MCF 10A (cell line): ENCODE measurements at regions of chr20 and their contacts with region 1.

Region 1: DNA sequence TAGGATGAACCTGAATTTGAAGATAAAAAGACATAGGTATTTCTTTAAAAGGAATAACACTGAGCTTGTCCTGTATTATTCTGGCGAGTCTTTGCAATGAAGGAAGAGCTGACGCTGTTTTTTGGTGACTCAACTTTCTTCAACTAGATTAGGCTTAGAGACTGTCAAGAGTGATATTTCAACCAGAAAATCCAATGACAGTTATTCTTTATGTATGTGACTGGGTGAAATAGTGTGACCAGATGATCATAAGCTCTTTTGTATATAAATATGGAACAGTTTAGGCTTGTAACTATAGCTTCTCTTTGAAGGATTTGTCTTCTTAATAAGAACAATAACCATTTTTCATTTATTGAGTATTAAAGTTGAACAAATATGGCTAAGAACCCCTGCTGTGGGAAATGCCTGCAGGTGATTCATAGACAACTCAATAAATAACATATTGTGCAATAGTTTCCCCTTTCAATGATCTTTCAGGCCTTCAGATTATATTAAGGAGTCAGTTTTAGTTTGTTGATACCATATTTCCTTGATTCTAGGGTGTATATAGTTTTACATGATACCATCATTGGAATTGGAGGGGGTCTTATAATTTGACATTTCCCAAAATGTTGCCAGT is 265.6 kb upstream of the JAG1 start:
- DNase-seq: peak; percentile 52
- H3K4me3 Mint-ChIP-seq: no peak overlapping the region
- H3K27ac Mint-ChIP-seq: peak overlapping the region; percentile 68
- H3K4me1 Mint-ChIP-seq: peaks cover 14% of the 10 kb centered on the region
- H3K27me3 Mint-ChIP-seq: no peaks in the 10 kb centered on the region
- CTCF ChIP-seq: no peak

Region 2: GRCh38 chr20:10922941-10923340 is 16.5 kb before region 1 on chr20:
- CTCF ChIA-PET with region 1: interaction called, 7 read pairs
- POLR2A ChIA-PET with region 1: interaction called, 11 read pairs
- intact Hi-C with region 1: no loop called
- DNase-seq: peak; percentile 85
- H3K4me3 Mint-ChIP-seq: peak overlapping the region; percentile 24
- H3K27ac Mint-ChIP-seq: peak overlapping the region; percentile 50
- H3K4me1 Mint-ChIP-seq: peaks cover 46% of the 10 kb centered on the region
- H3K27me3 Mint-ChIP-seq: no peaks in the 10 kb centered on the region
- CTCF ChIP-seq: no peak

Region 3: DNA sequence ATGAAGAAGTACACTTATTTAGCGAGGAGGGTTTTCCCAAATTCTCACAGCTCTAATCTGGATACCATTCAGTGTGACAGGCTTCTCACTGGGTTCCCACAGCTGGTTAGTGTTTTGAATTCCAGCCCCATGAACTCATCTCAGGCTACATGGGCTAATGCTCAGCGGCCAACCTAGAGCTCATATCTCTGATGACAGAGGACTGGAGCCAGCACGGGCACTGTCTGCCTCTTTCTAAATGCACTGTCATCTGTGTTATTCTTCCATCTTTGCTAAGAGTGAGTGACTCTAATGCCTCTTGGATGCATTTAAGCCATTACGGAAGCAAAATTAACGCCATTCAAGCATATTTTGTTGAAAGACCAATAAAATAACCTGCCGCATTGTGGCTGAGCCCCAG is 43.3 kb after region 1 on chr20:
- CTCF ChIA-PET with region 1: no interaction called
- POLR2A ChIA-PET with region 1: no interaction called
- intact Hi-C with region 1: no loop called
- DNase-seq: peak; percentile 59
- H3K4me3 Mint-ChIP-seq: no peak overlapping the region
- H3K27ac Mint-ChIP-seq: no peak overlapping the region
- H3K4me1 Mint-ChIP-seq: peaks cover 18% of the 10 kb centered on the region
- H3K27me3 Mint-ChIP-seq: no peaks in the 10 kb centered on the region
- CTCF ChIP-seq: no peak

Region 4: GRCh38 chr20:11012975-11013374 is 73.5 kb after region 1 on chr20:
- CTCF ChIA-PET with region 1: no interaction called
- POLR2A ChIA-PET with region 1: no interaction called
- intact Hi-C with region 1: no loop called
- DNase-seq: no peak
- H3K4me3 Mint-ChIP-seq: no peak overlapping the region
- H3K27ac Mint-ChIP-seq: no peak overlapping the region
- H3K4me1 Mint-ChIP-seq: no peaks in the 10 kb centered on the region
- H3K27me3 Mint-ChIP-seq: no peaks in the 10 kb centered on the region
- CTCF ChIP-seq: no peak